CD8-positive, alpha-beta memory T cell (primary cell): ENCODE measurements at regions of chr2 and their contacts with region 1.

Region 1: GRCh38 chr2:367246-367645 is 79.4 kb upstream of the ALKAL2 start:
- DNase-seq: no peak
- H3K4me3 ChIP-seq: no peak overlapping the region
- H3K4me3 Mint-ChIP-seq: no peak overlapping the region
- H3K27ac ChIP-seq: no peak overlapping the region
- H3K27ac Mint-ChIP-seq: no peak overlapping the region
- H3K4me1 ChIP-seq: no peaks in the 10 kb centered on the region
- H3K4me1 Mint-ChIP-seq: peaks cover 6 to 11% (median 10%) of the 10 kb centered on the region in 3 donors
- H3K27me3 ChIP-seq: no peaks in the 10 kb centered on the region
- H3K27me3 Mint-ChIP-seq: peaks cover 7 to 44% of the 10 kb centered on the region in 2 donors

Region 2: DNA sequence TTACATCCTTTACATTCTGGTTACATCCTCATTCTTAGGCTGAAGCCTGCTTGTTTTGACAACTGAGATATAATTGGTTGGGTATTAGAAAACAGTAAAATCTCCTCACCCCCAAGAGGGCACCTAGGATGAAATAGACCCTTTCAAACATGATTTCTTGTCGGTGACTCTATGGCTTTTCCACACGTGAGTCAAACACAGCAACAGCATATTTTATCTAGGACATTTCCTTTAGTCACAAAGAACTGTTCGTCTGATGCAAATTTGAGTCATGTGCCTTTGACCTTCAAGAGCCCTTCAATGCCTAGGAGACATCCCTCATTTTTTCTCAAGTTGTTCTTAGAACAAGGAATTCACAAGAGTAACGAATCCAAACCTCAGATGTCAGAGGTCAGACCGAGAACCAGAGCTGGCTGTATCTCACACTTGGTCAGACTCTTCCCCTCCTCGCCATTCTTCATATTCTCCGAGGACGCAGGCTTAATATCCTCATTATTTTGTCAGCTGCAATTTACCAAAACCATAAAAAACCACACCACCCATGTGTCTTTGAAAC is 18.8 kb before region 1 on chr2:
- CTCF ChIA-PET with region 1: no interaction called
- POLR2A ChIA-PET with region 1: interaction called, 10 read pairs
- DNase-seq: no peak
- H3K4me3 ChIP-seq: no peak overlapping the region
- H3K4me3 Mint-ChIP-seq: no peak overlapping the region
- H3K27ac ChIP-seq: no peak overlapping the region
- H3K27ac Mint-ChIP-seq: no peak overlapping the region
- H3K4me1 ChIP-seq: no peaks in the 10 kb centered on the region
- H3K4me1 Mint-ChIP-seq: peaks cover 0 to 1% (median under 1%) of the 10 kb centered on the region in 3 donors
- H3K27me3 ChIP-seq: peaks cover 5% of the 10 kb centered on the region
- H3K27me3 Mint-ChIP-seq: peaks cover 19 to 32% of the 10 kb centered on the region in 2 donors